ENCODE measurements at regions of chr20 and their contacts with region 1.

Region 1: DNA sequence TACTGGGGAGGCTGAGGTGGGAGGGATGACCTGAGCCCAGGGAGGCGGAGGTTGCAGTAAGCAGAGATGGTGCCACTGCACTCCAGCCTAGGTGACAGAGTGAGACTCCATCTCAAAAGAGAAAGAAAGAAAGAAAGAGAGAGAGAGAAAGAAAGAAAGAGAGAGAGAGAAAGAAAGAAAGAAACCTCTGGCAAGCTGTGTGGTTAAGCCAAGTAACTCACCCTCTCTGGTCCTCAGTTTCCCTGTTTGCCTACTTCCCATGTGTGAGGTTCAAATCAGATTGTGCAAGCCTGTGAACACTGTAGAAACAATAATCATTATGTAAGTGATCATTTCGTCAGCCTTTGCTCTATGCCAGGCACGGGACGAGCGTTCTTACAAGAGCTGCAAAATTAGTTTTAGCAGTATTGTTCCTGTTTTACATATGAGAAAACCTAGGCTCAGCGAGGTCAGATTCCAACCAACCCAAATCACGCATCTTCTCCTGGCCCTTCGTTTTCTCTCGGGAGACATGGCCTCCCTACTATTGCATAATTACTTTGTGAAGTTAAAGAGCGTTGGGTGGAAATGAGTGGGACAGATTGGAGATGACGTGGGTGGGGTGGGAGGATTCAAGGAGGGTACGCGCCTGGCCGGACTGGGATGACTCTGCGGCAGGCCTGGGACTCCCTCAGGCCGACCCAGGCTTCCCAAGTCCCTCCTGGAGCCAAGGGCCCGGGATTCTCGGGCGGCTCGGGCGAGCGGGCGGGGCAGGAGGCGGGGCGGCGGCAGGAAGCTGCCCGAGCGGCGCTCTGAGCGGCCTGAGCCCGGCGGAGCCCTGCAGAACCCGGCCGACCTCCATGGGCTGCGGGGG is at the start of gene SNX21:
- DNase-seq: peak; percentile 83
- H3K4me3 Mint-ChIP-seq: peak within 1 kb of the TSS; percentile 80
- H3K27ac Mint-ChIP-seq: peak within 1 kb of the TSS; percentile 84
- H3K4me1 Mint-ChIP-seq: peaks cover 26% of the 10 kb centered on the region
- H3K27me3 Mint-ChIP-seq: no peaks in the 10 kb centered on the region
- CTCF ChIP-seq: no peak
- total RNA-seq, gene SNX21: 8.5 and 13.9 TPM in 2 replicates

Region 2: DNA sequence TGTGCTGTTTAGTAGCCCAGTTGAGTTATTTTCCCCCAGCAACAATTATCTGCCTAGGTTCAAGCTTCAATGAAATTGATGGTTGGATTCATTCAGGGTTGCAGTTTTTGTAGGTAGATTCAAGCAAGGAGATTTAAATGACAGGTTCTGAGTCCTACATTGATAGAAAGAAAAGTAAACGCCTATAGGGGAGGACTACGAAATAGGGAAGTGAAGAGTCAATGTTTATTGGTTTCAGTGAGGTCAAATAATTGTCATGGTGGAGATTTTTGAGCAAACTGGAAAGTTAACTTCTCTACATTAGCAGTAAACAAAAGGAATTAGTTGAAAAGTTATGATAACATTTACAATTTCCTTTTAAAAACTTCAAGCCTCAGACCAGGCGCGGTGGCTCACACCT is 132.2 kb before region 1 on chr20:
- CTCF ChIA-PET with region 1: no interaction called
- POLR2A ChIA-PET with region 1: no interaction called
- intact Hi-C with region 1: no loop called
- DNase-seq: no peak
- H3K4me3 Mint-ChIP-seq: no peak overlapping the region
- H3K27ac Mint-ChIP-seq: no peak overlapping the region
- H3K4me1 Mint-ChIP-seq: no peaks in the 10 kb centered on the region
- H3K27me3 Mint-ChIP-seq: peaks cover 32% of the 10 kb centered on the region
- CTCF ChIP-seq: no peak

Region 3: GRCh38 chr20:45812157-45813020 is 20.9 kb before region 1 on chr20 and contains the start of gene UBE2C:
- CTCF ChIA-PET with region 1: interaction called, 3 read pairs
- POLR2A ChIA-PET with region 1: interaction called, 21 read pairs
- intact Hi-C with region 1: no loop called
- DNase-seq: peak; percentile 99
- H3K4me3 Mint-ChIP-seq: peak within 1 kb of the TSS; percentile 85
- H3K27ac Mint-ChIP-seq: peak within 1 kb of the TSS; percentile 78
- H3K4me1 Mint-ChIP-seq: peaks cover 24% of the 10 kb centered on the region
- H3K27me3 Mint-ChIP-seq: no peaks in the 10 kb centered on the region
- CTCF ChIP-seq: no peak
- total RNA-seq, gene UBE2C: 98.4 and 107 TPM in 2 replicates

Region 4: DNA sequence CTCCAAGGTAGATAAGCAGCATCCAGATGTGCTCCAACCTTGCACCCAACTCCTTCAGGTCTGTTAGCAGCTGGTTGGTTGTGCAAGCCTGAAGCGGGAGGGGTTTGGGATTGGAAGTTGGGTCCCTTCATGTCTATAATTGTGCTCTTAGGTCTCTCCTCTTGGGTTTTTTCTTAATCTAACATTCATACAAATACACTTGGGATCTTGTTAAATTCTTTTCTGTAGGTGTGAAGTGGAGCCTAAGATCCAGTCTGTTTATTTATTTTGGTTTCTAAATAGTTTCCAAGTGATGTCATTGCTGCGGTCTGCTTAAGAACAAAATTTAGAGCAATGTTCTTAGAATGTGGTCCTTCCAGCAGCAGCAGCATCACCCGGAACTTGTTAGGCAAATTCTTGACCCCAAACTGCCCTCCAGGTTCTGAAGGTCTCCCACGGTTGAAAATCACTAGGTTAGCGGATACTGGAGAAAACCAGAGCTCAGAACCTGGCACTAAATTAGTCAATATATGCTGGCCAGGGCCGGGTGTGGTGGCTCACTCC is 15.5 kb before region 1 on chr20:
- CTCF ChIA-PET with region 1: interaction called, 10 read pairs
- POLR2A ChIA-PET with region 1: interaction called, 21 read pairs
- intact Hi-C with region 1: no loop called
- DNase-seq: peak; percentile 42
- H3K4me3 Mint-ChIP-seq: peak overlapping the region; percentile 33
- H3K27ac Mint-ChIP-seq: peak overlapping the region; percentile 81
- H3K4me1 Mint-ChIP-seq: peaks cover 35% of the 10 kb centered on the region
- H3K27me3 Mint-ChIP-seq: peaks cover 10% of the 10 kb centered on the region
- CTCF ChIP-seq: no peak

Region 5: GRCh38 chr20:45822857-45823256 is 10.4 kb before region 1 on chr20:
- CTCF ChIA-PET with region 1: interaction called, 10 read pairs
- POLR2A ChIA-PET with region 1: interaction called, 21 read pairs
- intact Hi-C with region 1: no loop called
- DNase-seq: no peak
- H3K4me3 Mint-ChIP-seq: no peak overlapping the region
- H3K27ac Mint-ChIP-seq: no peak overlapping the region
- H3K4me1 Mint-ChIP-seq: peaks cover 7% of the 10 kb centered on the region
- H3K27me3 Mint-ChIP-seq: peaks cover 10% of the 10 kb centered on the region
- CTCF ChIP-seq: no peak

Region 6: DNA sequence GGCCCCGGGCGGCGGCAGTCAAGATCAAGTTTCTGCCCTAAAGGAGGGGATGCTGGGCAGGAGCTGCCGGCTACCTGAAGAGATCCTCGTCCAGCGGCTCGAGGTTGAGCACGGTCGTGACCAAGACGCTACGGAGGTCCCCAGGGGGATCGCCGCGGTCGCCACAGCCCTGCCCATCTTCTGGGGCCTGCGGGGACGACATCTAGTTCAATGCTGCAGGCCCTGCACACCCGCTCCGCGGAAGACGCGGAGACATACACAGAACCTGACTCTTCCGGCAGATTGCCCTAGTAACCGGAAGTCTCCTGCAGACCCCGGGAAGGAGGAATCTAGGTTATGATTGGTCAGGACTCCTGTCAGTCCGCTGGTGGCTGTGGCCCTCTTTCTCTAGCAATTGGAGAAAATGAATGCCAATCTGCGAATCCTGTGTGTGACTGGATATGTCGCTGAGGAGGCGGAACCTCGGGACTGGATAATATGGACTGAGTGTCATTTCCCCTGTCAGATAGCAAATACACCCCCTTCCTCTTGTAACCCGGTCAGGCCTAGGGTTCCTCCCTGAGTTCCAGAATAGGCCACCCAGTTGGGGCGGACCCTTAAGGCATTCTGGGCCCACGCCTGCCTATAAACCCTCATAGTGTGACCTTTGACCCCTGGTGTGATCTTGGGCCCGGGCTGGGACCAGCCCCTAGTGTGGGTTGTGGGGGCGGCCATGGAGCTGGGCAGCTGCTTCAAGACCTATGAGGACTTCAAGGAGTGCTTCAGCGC is 24.0 kb after region 1 on chr20 and contains the starts of genes ACOT8 and ZSWIM3:
- CTCF ChIA-PET with region 1: interaction called, 3 read pairs
- POLR2A ChIA-PET with region 1: interaction called, 22 read pairs
- intact Hi-C with region 1: no loop called
- DNase-seq: peak; percentile 100
- H3K4me3 Mint-ChIP-seq: peak within 1 kb of the TSS; percentile 92
- H3K27ac Mint-ChIP-seq: peak within 1 kb of the TSS; percentile 92
- H3K4me1 Mint-ChIP-seq: peaks cover 16% of the 10 kb centered on the region
- H3K27me3 Mint-ChIP-seq: no peaks in the 10 kb centered on the region
- CTCF ChIP-seq: no peak
- total RNA-seq, gene ACOT8: 19.5 and 20.1 TPM in 2 replicates
- total RNA-seq, gene ZSWIM3: 1.4 and 2.4 TPM in 2 replicates

Measured in MCF 10A (cell line).